ENCODE measurements at regions of chr16 and their contacts with region 1.

Region 1: GRCh38 chr16:56700195-56700594 is 17.9 kb downstream of the MT1X start:
- DNase-seq: no peak
- H3K4me3 ChIP-seq: no peak overlapping the region
- H3K4me3 Mint-ChIP-seq: no peak overlapping the region
- H3K27ac ChIP-seq: no peak overlapping the region
- H3K27ac Mint-ChIP-seq: peak overlapping the region in 3 of 7 donors; percentile 6 to 66 (median 66)
- H3K4me1 ChIP-seq: peaks cover 7% of the 10 kb centered on the region
- H3K4me1 Mint-ChIP-seq: peaks cover 7 to 8% (median 8%) of the 10 kb centered on the region in 4 donors
- H3K27me3 ChIP-seq: no peaks in the 10 kb centered on the region
- H3K27me3 Mint-ChIP-seq: no peaks in the 10 kb centered on the region

Region 2: GRCh38 chr16:56513972-56514371 is 186.2 kb before region 1 on chr16:
- CTCF ChIA-PET with region 1: interaction called, 50 read pairs
- POLR2A ChIA-PET with region 1: interaction called, 10 read pairs
- intact Hi-C with region 1: loop called (anchors 1 kb)
- DNase-seq: peak; percentile 40 to 69 (median 53)
- H3K4me3 ChIP-seq: no peak overlapping the region
- H3K4me3 Mint-ChIP-seq: peak overlapping the region in 1 of 8 donors; percentile 1
- H3K27ac ChIP-seq: no peak overlapping the region
- H3K27ac Mint-ChIP-seq: peak overlapping the region in 2 of 7 donors; percentile 2 to 9
- H3K4me1 ChIP-seq: peaks cover 21% of the 10 kb centered on the region
- H3K4me1 Mint-ChIP-seq: peaks cover 41 to 61% (median 46%) of the 10 kb centered on the region in 4 donors
- H3K27me3 ChIP-seq: no peaks in the 10 kb centered on the region
- H3K27me3 Mint-ChIP-seq: no peaks in the 10 kb centered on the region

Region 3: DNA sequence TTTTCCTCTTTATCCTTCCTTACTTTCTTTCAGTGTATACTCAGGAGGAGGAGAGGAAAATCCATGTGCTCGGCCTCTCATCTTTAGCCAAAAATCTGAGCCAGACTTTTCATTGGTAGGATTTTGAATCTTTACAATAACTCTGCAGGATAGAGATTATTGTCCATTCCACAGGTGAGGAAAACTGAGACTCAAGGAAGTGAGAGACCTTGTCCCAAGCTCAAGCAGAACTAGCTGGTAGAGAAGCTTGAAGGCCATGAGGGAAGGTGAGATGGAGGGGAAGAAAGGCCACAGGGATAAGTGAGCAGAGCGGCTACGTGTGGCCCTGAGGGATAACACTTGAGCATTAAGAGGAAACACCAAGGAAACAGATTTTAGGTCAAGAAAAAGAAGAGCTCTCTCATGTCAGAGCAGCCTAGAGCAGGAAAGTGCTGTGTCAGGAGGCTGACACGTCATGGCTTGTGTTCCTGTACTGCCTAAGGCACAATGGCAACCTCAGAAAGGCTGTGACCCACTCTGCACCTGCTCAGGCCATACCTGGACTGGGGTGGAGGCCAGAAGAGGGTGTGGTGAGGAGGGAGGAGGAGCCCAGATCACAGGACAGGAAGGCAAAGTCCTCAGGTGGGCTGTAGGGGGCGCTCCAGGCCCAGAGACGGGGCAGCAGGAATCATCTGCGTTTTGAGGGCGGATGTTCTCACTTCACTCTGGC is 123.5 kb before region 1 on chr16:
- CTCF ChIA-PET with region 1: interaction called, 150 read pairs
- POLR2A ChIA-PET with region 1: interaction called, 17 read pairs
- intact Hi-C with region 1: loop called (anchors 1 kb)
- DNase-seq: peak; percentile 85 to 89 (median 87)
- H3K4me3 ChIP-seq: no peak overlapping the region
- H3K4me3 Mint-ChIP-seq: no peak overlapping the region
- H3K27ac ChIP-seq: no peak overlapping the region
- H3K27ac Mint-ChIP-seq: peak overlapping the region in 6 of 7 donors; percentile 36 to 79 (median 58)
- H3K4me1 ChIP-seq: no peaks in the 10 kb centered on the region
- H3K4me1 Mint-ChIP-seq: peaks cover 4 to 9% (median 6%) of the 10 kb centered on the region in 4 donors
- H3K27me3 ChIP-seq: no peaks in the 10 kb centered on the region
- H3K27me3 Mint-ChIP-seq: no peaks in the 10 kb centered on the region

Region 4: DNA sequence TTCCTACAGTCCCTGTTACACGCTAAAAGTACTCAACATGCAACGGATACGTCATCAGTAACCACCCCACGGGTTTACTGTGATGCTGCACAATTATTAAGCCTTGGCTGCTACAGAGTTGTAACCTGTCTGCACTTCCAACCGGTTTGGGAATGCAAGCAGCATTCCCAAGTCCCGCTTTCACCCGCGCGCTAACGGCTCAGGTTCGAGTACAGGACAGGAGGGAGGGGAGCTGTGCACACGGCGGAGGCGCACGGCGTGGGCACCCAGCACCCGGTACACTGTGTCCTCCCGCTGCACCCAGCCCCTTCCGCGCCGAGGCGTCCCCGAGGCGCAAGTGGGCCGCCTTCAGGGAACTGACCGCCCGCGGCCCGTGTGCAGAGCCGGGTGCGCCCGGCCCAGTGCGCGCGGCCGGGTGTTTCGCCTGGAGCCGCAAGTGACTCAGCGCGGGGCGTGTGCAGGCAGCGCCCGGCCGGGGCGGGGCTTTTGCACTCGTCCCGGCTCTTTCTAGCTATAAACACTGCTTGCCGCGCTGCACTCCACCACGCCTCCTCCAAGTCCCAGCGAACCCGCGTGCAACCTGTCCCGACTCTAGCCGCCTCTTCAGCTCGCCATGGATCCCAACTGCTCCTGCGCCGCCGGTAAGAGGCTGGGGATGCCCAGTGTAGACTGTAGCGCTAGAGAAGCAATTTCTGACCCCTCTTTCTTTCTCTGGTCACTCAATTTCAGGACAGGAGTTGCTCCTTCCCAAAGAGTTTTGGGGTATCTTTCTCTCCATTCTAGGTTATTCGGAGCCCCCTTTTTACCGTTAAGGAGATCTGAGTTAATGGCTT is 91.9 kb before region 1 on chr16 and contains the start of gene MT2A:
- CTCF ChIA-PET with region 1: interaction called, 37 read pairs
- POLR2A ChIA-PET with region 1: interaction called, 22 read pairs
- intact Hi-C with region 1: loop called (anchors 1 kb)
- DNase-seq: peak; percentile 81 to 93 (median 85)
- H3K4me3 ChIP-seq: peak within 1 kb of the TSS; percentile 70 to 94
- H3K4me3 Mint-ChIP-seq: peak within 1 kb of the TSS; percentile 92 to 99 (median 98)
- H3K27ac ChIP-seq: peak within 1 kb of the TSS; percentile 82
- H3K27ac Mint-ChIP-seq: peak within 1 kb of the TSS; percentile 88 to 100 (median 96)
- H3K4me1 ChIP-seq: peaks cover 46% of the 10 kb centered on the region
- H3K4me1 Mint-ChIP-seq: peaks cover 26 to 53% (median 39%) of the 10 kb centered on the region in 4 donors
- H3K27me3 ChIP-seq: no peaks in the 10 kb centered on the region
- H3K27me3 Mint-ChIP-seq: peaks cover 0 to 3% of the 10 kb centered on the region in 2 donors
- total RNA-seq, gene MT2A: 15.8 to 17.7 TPM

Region 5: DNA sequence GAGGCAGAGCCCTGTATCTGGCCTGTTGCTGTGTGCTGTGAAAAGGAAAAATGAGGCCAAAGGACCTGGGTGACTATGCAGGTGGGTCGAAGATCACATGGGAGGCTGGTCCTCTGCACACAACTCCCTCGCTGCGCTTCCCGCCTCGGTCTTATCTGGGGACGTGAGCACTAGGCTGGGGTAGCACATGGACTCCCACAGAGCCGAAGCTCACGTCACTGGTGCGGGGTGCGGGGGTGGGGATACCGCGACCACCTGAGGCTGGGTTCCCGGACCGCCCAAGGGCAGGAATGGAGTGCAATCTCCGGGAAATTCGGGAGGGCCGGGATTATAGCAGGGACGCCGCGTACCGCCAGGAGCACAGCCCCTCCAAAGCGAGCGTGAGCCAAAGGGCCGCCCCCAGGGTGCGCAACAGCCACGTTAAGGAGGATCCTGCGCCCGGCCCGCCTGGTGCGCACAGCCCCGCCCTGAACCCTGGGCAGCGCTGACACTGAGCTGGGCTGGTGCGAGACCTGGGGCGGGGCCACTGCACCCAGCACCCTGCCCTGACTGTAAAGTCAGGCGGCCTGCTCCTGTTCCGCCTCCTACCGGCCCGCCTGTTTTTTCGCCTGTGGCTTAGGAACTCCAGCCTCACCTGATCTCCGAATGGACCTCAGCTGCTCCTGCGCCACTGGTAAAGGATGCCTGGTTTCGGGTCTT is 57.0 kb before region 1 on chr16:
- CTCF ChIA-PET with region 1: interaction called, 48 read pairs
- POLR2A ChIA-PET with region 1: interaction called, 10 read pairs
- intact Hi-C with region 1: loop called (anchors 1 kb)
- DNase-seq: peak; percentile 63 to 76 (median 71)
- H3K4me3 ChIP-seq: peak overlapping the region in 1 of 2 donors; percentile 0
- H3K4me3 Mint-ChIP-seq: peak overlapping the region; percentile 75 to 84 (median 79)
- H3K27ac ChIP-seq: no peak overlapping the region
- H3K27ac Mint-ChIP-seq: peak overlapping the region in 5 of 7 donors; percentile 63 to 77 (median 67)
- H3K4me1 ChIP-seq: peaks cover 16% of the 10 kb centered on the region
- H3K4me1 Mint-ChIP-seq: peaks cover 18 to 22% (median 19%) of the 10 kb centered on the region in 4 donors
- H3K27me3 ChIP-seq: peaks cover 14% of the 10 kb centered on the region
- H3K27me3 Mint-ChIP-seq: peaks cover 12 to 23% of the 10 kb centered on the region in 2 donors

Region 6: GRCh38 chr16:56681939-56682702 is 18.1 kb before region 1 on chr16 and contains the start of gene MT1X:
- CTCF ChIA-PET with region 1: interaction called, 9 read pairs
- POLR2A ChIA-PET with region 1: interaction called, 16 read pairs
- intact Hi-C with region 1: loop called (anchors 1 kb)
- DNase-seq: peak; percentile 83 to 93 (median 92)
- H3K4me3 ChIP-seq: peak within 1 kb of the TSS; percentile 64 to 79
- H3K4me3 Mint-ChIP-seq: peak within 1 kb of the TSS; percentile 94 to 99 (median 96)
- H3K27ac ChIP-seq: peak within 1 kb of the TSS; percentile 74
- H3K27ac Mint-ChIP-seq: peak within 1 kb of the TSS; percentile 96 to 99 (median 97)
- H3K4me1 ChIP-seq: peaks cover 22% of the 10 kb centered on the region
- H3K4me1 Mint-ChIP-seq: peaks cover 13 to 31% (median 18%) of the 10 kb centered on the region in 4 donors
- H3K27me3 ChIP-seq: no peaks in the 10 kb centered on the region
- H3K27me3 Mint-ChIP-seq: no peaks in the 10 kb centered on the region
- total RNA-seq, gene MT1X: 21.0 to 23.7 TPM

Region 7: DNA sequence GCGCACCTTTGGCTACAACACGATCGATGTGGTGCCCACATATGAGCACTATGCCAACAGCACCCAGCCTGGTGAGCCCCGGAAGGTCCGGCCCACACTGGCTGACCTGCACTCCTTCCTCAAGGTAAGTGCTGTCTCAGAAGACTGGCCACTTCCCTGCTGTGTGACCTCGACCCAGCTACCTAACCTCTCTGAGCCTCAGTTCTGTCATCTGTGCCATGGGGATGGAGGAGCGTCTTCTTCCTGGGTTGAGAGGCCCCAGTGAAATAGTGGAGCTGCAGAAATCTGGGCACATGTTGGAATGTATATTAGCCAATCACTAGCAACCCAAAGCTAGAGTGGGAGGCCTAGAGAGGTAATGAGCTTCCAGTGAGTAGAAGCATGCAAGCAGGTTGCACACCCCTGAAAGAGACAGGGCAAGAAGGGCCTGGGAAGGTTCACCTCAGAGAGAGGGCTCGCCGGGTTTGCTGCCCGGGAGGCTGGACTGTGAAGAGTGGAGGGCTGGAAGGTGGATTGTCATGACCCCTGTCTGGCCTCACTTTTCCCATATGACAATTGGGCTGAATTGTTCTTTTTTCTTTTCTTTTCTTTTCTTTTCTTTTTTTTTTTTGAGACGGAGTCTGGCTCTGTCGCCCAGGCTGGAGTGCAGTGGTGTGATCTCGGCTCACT is 165.3 kb after region 1 on chr16:
- CTCF ChIA-PET with region 1: no interaction called
- POLR2A ChIA-PET with region 1: no interaction called
- intact Hi-C with region 1: no loop called
- DNase-seq: no peak
- H3K4me3 ChIP-seq: no peak overlapping the region
- H3K4me3 Mint-ChIP-seq: no peak overlapping the region
- H3K27ac ChIP-seq: no peak overlapping the region
- H3K27ac Mint-ChIP-seq: peak overlapping the region in 1 of 7 donors; percentile 59
- H3K4me1 ChIP-seq: peaks cover 38% of the 10 kb centered on the region
- H3K4me1 Mint-ChIP-seq: peaks cover 26 to 40% (median 34%) of the 10 kb centered on the region in 4 donors
- H3K27me3 ChIP-seq: no peaks in the 10 kb centered on the region
- H3K27me3 Mint-ChIP-seq: no peaks in the 10 kb centered on the region